ENCODE measurements at regions of chr11 and their contacts with region 1.

Region 1: GRCh38 chr11:72436661-72437060 is 2.3 kb upstream of the CLPB start:
- DNase-seq: no peak
- H3K4me3 Mint-ChIP-seq: no peak overlapping the region
- H3K27ac Mint-ChIP-seq: no peak overlapping the region
- H3K4me1 Mint-ChIP-seq: peaks cover 28% of the 10 kb centered on the region
- H3K27me3 Mint-ChIP-seq: no peaks in the 10 kb centered on the region

Region 2: GRCh38 chr11:72209101-72209500 is 227.6 kb before region 1 on chr11:
- CTCF ChIA-PET with region 1: no interaction called
- intact Hi-C with region 1: no loop called
- DNase-seq: no peak
- H3K4me3 Mint-ChIP-seq: no peak overlapping the region
- H3K27ac Mint-ChIP-seq: no peak overlapping the region
- H3K4me1 Mint-ChIP-seq: no peaks in the 10 kb centered on the region
- H3K27me3 Mint-ChIP-seq: peaks cover 4% of the 10 kb centered on the region

Region 3: GRCh38 chr11:72446902-72447769 is 10.5 kb after region 1 on chr11:
- CTCF ChIA-PET with region 1: interaction called, 11 read pairs
- intact Hi-C with region 1: no loop called
- DNase-seq: no peak
- H3K4me3 Mint-ChIP-seq: no peak overlapping the region
- H3K27ac Mint-ChIP-seq: no peak overlapping the region
- H3K4me1 Mint-ChIP-seq: no peaks in the 10 kb centered on the region
- H3K27me3 Mint-ChIP-seq: no peaks in the 10 kb centered on the region

Region 4: DNA sequence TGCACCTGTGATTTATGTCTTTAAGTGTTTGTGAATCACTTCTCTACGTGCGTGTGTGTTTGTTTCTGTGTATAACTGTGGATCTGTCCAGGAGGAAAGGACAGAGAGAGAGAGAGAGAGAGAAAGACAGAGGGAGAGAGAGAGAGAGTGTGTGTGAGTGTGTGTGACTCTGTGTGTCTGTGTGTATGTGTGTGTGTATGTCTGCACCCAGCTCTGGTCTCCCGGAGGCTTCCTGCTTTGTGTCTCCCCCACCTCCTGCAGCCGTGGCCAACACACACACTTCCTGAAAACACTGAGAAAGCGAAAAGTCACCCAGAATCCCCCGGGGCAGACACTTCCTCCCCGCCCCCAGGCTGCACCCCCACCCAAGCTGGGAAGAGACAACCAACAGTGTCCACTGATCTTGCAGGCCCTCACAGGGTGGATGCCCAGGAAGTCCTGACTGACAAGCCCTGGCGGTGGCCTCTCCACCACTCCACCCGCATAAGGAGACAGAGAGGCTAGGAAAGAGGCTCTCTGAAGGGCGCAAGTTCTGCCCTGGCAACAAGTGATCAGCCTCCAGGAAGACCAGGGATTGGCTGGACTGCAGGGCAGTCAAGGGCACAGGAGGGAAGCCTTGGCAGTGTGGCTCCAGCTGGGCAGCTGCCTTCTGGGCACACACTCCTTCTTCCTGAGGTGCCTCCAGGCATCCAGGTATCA is 285.5 kb after region 1 on chr11:
- CTCF ChIA-PET with region 1: no interaction called
- intact Hi-C with region 1: no loop called
- DNase-seq: peak; percentile 93
- H3K4me3 Mint-ChIP-seq: peak overlapping the region; percentile 90
- H3K27ac Mint-ChIP-seq: peak overlapping the region; percentile 95
- H3K4me1 Mint-ChIP-seq: peaks cover 49% of the 10 kb centered on the region
- H3K27me3 Mint-ChIP-seq: no peaks in the 10 kb centered on the region